Heart right ventricle (tissue), 16 donors: ENCODE measurements at regions of chr11 and their contacts with region 1.

Region 1: GRCh38 chr11:18802381-18803257 is 11.0 kb upstream of the PTPN5 start:
- DNase-seq: peak in 1 of 2 donors; percentile 49
- ATAC-seq: peak in 3 of 8 donors; percentile 27 to 65 (median 31)
- H3K4me3 ChIP-seq: no peak overlapping the region
- H3K27ac ChIP-seq: no peak overlapping the region
- H3K4me1 ChIP-seq: peaks cover 0 to 7% (median 0%) of the 10 kb centered on the region in 9 donors
- H3K27me3 ChIP-seq: peaks cover 0 to 9% (median 0%) of the 10 kb centered on the region in 7 donors
- CTCF ChIP-seq: peak; percentile 18 to 72 (median 61)

Region 2: GRCh38 chr11:18115360-18116127 is 687.1 kb before region 1 on chr11:
- intact Hi-C with region 1: loop called in 2 of 10 experiments (anchors 5 kb)
- DNase-seq: peak in 1 of 2 donors; percentile 32
- ATAC-seq: peak; percentile 65 to 82 (median 73)
- H3K4me3 ChIP-seq: no peak overlapping the region
- H3K27ac ChIP-seq: no peak overlapping the region
- H3K4me1 ChIP-seq: no peaks in the 10 kb centered on the region
- H3K27me3 ChIP-seq: peaks cover 0 to 31% (median 19%) of the 10 kb centered on the region in 7 donors
- CTCF ChIP-seq: peak; percentile 75 to 91 (median 84)

Region 3: DNA sequence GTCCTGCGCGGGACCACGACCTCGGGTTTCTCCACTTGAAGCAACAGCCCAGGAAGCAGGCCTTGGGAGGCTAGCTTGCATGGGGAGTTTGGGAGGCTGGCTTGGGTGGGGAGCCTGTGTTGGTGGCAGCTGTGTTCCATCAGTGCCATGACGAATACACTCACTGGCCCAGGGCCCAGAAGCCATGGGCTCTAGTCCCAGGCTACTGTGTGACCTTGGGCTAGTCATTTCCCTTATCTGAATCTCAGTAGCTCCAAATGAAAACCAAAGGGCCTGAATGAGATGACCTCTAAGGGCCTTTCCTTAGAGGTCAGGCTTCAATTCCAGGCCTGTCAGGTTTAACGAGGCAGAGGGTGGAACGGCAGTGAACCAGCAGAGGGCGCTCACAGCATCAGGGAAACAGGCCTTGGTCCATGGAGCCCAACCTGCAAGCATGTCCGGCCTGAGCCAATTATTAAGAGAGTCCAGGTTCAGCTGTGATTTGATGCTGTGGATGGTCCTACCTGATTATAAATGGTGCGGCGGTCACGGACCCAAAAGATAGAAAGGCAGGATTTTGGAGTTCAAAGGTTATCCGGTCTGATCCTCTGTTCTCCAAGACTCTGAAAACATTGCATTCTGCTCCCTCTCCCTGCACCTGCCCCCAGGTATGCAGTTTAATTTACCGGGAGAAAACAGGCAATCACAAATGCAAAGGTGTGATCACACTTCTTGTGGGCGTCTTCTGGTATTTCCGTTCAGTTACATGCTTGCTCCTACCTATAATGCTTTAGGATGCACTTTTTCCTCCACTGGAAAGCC is 26.9 kb before region 1 on chr11:
- intact Hi-C with region 1: loop called in 3 of 10 experiments (anchors 2 kb)
- DNase-seq: peak; percentile 52 to 58
- ATAC-seq: peak in 3 of 8 donors; percentile 29 to 38 (median 35)
- H3K4me3 ChIP-seq: no peak overlapping the region
- H3K27ac ChIP-seq: no peak overlapping the region
- H3K4me1 ChIP-seq: peaks cover 0 to 16% (median under 1%) of the 10 kb centered on the region in 9 donors
- H3K27me3 ChIP-seq: peaks cover 0 to 4% (median 0%) of the 10 kb centered on the region in 7 donors
- CTCF ChIP-seq: peak; percentile 44 to 75 (median 68)

Region 4: GRCh38 chr11:18878211-18878610 is 75.6 kb after region 1 on chr11:
- intact Hi-C with region 1: no loop called
- DNase-seq: no peak
- ATAC-seq: no peak
- H3K4me3 ChIP-seq: no peak overlapping the region
- H3K27ac ChIP-seq: no peak overlapping the region
- H3K4me1 ChIP-seq: no peaks in the 10 kb centered on the region
- H3K27me3 ChIP-seq: peaks cover 0 to 19% (median 5%) of the 10 kb centered on the region in 7 donors
- CTCF ChIP-seq: no peak

Region 5: DNA sequence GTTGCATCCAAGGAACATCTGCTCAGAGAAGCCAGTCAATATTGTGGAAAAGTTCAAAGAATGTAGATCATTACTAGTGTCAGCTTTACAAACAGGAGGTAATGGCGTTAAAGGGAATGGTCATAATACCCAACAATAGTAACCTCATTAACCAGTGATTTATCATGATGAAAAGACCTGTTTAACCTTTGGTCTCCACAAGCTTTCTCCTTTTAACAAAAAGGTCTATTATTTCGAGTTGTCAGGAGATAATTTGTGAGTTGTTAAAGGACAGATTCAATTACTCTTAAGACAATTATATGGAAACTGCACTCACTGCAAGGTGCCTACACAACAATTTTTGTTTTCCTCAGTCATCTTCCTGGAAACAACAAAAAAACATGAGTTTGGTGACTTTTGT is 1487.1 kb after region 1 on chr11:
- intact Hi-C with region 1: loop called in 1 of 10 experiments (anchors 5 kb)
- DNase-seq: no peak
- ATAC-seq: no peak
- H3K4me3 ChIP-seq: no peak overlapping the region
- H3K27ac ChIP-seq: no peak overlapping the region
- H3K4me1 ChIP-seq: no peaks in the 10 kb centered on the region
- H3K27me3 ChIP-seq: peaks cover 0 to 25% (median 6%) of the 10 kb centered on the region in 7 donors
- CTCF ChIP-seq: no peak